Activated CD8-positive, alpha-beta memory T cell treated with anti-CD3 and anti-CD28 coated beads, Interleukin-2, amount 10 ng/mL, durations not matched to agents 7 days and 5 days (primary cell): ENCODE measurements at regions of chr5 and their contacts with region 1.

Region 1: GRCh38 chr5:137629646-137630045 is 106.2 kb downstream of the KLHL3 start:
- DNase-seq: no peak
- ATAC-seq: peak; percentile 69
- H3K4me3 Mint-ChIP-seq: no peak overlapping the region
- H3K27ac Mint-ChIP-seq: no peak overlapping the region
- H3K4me1 Mint-ChIP-seq: no peaks in the 10 kb centered on the region
- H3K27me3 Mint-ChIP-seq: no peaks in the 10 kb centered on the region

Region 2: DNA sequence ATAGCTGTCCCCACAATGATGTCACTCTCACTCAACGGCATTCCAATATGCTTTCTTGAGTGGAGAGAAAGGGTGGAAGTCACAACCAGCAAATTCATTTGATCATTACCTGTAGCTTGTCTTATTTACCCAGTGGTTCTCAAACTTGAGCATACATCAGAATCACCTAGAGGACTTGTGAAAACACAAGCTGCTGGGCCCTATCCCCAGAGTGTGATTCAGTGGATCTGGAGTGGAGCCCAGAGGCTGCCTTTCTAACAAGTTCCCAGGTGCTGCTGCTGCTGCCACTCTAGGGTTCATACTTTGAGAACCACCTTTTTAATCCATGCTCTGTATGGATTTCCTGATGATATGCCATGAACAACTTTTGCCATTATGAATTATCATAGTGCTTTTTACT is 11.5 kb after region 1 on chr5:
- CTCF ChIA-PET with region 1: interaction called, 16 read pairs
- DNase-seq: no peak
- ATAC-seq: no peak
- H3K4me3 Mint-ChIP-seq: no peak overlapping the region
- H3K27ac Mint-ChIP-seq: no peak overlapping the region
- H3K4me1 Mint-ChIP-seq: no peaks in the 10 kb centered on the region
- H3K27me3 Mint-ChIP-seq: no peaks in the 10 kb centered on the region

Region 3: DNA sequence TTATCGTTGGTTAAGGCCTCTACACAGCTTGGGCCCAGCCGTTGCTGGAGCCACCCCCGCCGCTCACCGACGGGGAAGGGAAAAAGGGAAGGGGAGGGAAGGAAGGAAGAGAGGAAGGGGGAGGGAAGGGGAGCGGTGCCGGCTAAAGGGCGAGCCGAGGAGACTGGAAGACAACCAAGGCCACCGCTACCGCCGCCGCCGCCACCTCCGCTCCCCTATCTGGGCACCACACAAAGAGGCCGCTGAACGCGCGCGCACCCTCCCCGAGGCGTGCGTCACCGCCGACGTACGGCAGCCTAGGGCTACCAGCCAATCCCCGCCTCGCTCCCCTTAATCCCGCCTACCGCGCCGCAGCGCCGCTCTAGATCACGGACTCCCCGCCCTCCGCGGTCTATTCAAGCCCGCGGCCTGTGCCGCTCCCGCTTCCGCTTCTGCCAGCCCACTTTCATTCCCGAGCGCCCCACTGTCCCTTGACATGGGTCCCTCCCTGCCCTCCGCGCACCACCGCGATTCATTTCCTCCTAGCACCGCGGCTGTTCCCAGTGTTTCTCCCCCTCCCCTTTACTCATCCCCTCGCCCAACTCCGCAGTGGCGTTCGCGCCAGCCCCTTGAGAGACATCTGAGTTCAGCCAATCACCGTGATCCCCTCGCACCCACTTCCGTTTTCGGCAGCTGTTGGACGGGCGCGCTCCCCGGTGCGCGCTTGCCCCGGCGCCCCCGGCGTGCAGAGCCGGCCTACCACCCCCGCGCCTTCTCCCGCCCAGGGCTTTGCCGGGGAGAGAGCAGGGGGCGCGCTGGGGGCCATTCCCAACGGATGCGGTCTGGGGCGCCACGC is 124.7 kb after region 1 on chr5 and contains the start of gene HNRNPA0:
- CTCF ChIA-PET with region 1: interaction called, 122 read pairs
- DNase-seq: peak; percentile 97
- ATAC-seq: peak; percentile 88
- H3K4me3 Mint-ChIP-seq: peak within 1 kb of the TSS; percentile 96
- H3K27ac Mint-ChIP-seq: peak within 1 kb of the TSS; percentile 100
- H3K4me1 Mint-ChIP-seq: peaks cover 30% of the 10 kb centered on the region
- H3K27me3 Mint-ChIP-seq: no peaks in the 10 kb centered on the region
- total RNA-seq, gene HNRNPA0: 26.0 to 34.0 TPM